ENCODE measurements at regions of chr7 and their contacts with region 1.

Region 1: DNA sequence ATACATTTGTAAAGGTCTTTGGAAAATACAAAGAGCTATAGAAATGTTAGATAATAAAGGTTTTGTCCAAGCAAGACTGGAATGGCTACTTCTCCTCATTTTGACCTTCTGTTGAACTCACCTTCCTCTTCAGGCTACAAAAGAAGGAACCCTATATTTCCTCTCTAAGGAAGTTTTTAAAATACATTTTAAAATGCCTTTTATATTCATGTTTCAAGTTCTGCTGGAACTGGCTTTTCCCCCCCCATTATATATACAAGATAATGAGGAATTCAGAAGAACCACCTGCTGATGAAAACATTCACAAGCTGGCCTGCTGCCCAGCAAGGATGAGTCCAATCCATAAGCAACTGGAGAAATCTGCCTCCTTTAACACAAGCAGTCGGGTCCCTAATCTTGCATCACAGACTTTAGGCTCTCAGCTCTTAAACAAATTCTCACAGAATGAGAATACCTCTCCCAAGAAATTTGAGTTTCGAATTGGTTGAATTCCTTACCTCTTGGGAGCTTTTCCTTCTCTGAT is 44.6 kb downstream of the MTERF1 start:
- DNase-seq: peak; percentile 23
- H3K4me3 ChIP-seq: no peak overlapping the region
- H3K27ac ChIP-seq: no peak overlapping the region
- H3K27me3 ChIP-seq: no peaks in the 10 kb centered on the region
- CTCF ChIP-seq: no peak

Region 2: GRCh38 chr7:91852263-91852741 is 16.4 kb after region 1 on chr7:
- CTCF ChIA-PET with region 1: interaction called, 13 read pairs
- POLR2A ChIA-PET with region 1: no interaction called
- DNase-seq: no peak
- H3K4me3 ChIP-seq: no peak overlapping the region
- H3K27ac ChIP-seq: no peak overlapping the region
- H3K27me3 ChIP-seq: no peaks in the 10 kb centered on the region
- CTCF ChIP-seq: no peak

Region 3: GRCh38 chr7:91940572-91941341 is 104.8 kb after region 1 on chr7 and contains the start of gene AKAP9:
- CTCF ChIA-PET with region 1: interaction called, 10 read pairs
- POLR2A ChIA-PET with region 1: no interaction called
- DNase-seq: no peak
- H3K4me3 ChIP-seq: peak within 1 kb of the TSS; percentile 89
- H3K27ac ChIP-seq: peak within 1 kb of the TSS; percentile 89
- H3K27me3 ChIP-seq: no peaks in the 10 kb centered on the region
- CTCF ChIP-seq: no peak
- polyA plus RNA-seq, gene AKAP9: 17.2 and 24.3 TPM in 2 replicates